ENCODE measurements at regions of chr2 and their contacts with region 1.

Region 1: DNA sequence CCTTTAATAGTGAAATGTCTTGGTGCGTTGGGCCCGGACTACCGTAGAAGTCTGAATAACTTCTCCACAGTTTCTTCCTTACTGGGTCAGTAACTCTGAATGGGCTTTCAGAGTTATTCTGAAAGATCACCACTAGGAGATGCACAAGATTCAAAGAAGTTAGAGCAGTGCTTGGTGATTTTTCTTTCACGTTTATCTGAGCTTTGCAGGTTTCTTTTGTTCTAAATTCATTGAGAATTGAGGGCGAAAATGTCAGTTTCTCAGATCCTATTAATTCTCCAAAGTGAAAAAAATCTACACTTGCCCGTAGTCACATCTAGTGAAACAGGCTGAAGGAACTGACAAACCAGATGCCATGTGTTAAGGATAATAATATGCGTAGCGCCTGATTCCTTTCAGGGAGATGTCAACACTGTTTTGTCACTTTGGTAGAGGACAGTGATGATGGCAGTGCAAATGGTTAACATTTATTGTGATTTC is 70.1 kb downstream of the QPCT start:
- DNase-seq: no peak
- H3K4me3 ChIP-seq: peak overlapping the region in 2 of 59 donors; percentile 11 to 39
- H3K27ac ChIP-seq: no peak overlapping the region
- H3K27me3 ChIP-seq: peaks cover 0 to 7% (median 0%) of the 10 kb centered on the region in 45 donors
- CTCF ChIP-seq: peak; percentile 63 to 93 (median 80)

Region 2: DNA sequence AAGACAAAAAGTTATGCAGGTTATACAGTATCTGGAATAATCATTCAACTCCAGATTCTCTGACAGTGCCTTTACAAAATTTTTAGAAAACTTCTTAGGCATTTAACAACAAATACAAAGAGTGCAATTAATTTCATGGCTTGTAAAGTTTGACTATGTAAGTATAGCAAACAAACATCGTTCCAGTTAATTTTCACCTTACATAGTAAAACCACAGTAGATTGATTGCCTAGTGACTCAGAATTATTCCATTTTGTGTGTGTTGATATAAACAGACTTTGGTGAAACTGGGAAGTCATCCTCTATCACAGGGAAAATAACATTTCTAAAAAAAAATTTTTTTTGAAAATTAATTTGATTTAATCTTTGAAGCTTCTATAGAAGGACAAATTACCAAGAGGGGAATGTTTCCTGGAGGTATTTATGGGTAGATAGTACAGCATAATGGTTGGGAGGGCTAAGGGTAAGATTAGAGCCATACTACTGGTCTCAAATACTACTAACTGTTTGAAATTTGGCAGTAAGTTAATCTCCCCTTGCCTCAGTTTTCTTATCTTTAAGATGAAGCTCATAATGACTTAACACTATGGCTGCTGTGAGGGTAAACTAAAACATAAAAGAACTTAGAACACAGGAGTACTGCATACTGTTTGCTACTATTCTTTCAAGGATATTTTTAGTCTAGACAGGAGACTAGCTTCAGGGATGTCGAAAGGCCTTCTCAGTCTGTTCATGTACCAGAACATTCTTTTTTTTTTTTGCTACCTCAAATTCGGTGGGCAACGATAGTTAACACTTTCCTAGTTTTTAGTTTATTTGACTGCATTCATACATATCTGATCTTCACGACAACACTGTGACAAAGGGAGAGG is 163.4 kb before region 1 on chr2:
- intact Hi-C with region 1: no loop called
- DNase-seq: no peak
- H3K4me3 ChIP-seq: no peak overlapping the region
- H3K27ac ChIP-seq: no peak overlapping the region
- H3K27me3 ChIP-seq: no peaks in the 10 kb centered on the region
- CTCF ChIP-seq: no peak

Region 3: DNA sequence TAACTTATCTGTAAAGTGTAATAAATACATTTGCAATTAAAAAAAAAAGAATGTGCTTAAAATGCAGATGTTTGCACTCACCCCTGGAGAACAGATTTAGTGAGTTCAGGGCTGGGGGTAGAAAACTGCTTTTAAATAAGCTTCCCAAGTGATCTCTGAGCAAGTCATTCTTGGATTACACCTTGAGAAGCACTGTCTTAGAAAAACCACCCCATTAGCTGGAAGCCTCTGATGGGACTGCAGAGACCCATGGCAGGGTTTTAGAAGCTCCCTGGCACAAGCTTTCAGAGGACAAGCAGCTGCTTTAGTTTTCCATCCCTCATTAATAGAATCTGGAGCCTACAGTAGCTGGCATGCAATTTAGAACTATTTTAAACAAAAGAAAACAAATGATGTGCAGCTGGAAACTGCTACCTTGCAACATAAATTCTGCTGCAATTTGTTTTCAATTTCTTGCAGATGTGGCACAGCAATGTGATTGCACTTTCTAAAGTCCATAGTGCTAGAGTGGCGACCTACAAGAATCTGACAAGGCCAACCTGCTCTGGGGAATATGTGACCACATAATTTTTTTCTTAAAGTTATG is 115.4 kb after region 1 on chr2:
- intact Hi-C with region 1: loop called in 1 of 2 experiments (anchors 10 kb)
- DNase-seq: no peak
- H3K4me3 ChIP-seq: no peak overlapping the region
- H3K27ac ChIP-seq: no peak overlapping the region
- H3K27me3 ChIP-seq: peaks cover 0 to under 1% (median 0%) of the 10 kb centered on the region in 45 donors
- CTCF ChIP-seq: no peak

Region 4: DNA sequence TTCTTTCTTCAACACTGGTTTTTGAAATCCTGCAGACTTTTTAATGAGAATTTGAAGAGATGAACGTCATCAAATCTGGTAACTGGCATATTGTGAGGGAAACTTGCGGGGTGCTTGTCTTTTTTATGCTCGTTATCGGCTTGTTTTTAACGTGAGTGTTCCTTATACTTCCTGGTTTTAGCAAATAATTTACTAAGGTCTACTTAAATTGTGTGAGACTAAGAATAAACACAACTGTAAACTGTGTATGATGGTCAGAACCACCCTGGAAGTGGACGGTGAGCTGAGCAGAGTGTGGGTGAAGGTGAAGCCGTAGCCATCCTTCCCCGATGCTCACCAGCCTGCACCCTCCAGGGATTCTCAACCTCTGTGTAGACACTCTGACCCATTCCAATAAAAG is 339.2 kb after region 1 on chr2:
- intact Hi-C with region 1: no loop called
- DNase-seq: no peak
- H3K4me3 ChIP-seq: no peak overlapping the region
- H3K27ac ChIP-seq: no peak overlapping the region
- H3K27me3 ChIP-seq: no peaks in the 10 kb centered on the region
- CTCF ChIP-seq: no peak

Region 5: DNA sequence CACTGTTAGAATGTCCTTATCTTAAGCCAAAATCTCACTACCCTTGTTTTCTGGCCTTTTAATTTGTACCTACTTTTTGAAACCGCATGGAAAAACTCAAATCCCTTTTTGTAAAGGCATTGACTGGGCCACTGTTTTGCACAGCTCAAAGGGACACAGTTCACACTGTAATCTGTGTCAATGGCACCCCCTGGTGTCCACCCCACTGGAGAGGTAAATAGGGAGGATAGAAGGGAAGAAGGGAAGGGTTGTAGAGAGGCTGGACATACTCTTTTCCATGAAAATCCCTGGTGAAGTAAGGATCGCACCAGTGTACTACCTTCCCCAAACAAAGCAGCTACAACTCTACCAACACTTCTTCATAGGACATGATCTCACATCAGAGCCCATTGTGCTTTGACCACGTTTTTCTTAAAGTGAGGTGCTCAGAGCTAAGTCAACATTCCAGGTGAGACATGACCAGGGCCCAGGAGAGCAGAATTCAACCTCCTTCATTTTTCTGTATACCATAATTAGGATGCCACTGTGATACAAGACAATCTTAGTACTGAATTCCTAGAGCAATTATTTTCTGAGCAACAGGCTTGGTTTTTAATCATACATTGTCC is 418.2 kb after region 1 on chr2:
- intact Hi-C with region 1: loop called (anchors 1 to 2 kb)
- DNase-seq: peak; percentile 44 to 93 (median 84)
- H3K4me3 ChIP-seq: no peak overlapping the region
- H3K27ac ChIP-seq: no peak overlapping the region
- H3K27me3 ChIP-seq: no peaks in the 10 kb centered on the region
- CTCF ChIP-seq: peak; percentile 61 to 93 (median 80)

Region 6: DNA sequence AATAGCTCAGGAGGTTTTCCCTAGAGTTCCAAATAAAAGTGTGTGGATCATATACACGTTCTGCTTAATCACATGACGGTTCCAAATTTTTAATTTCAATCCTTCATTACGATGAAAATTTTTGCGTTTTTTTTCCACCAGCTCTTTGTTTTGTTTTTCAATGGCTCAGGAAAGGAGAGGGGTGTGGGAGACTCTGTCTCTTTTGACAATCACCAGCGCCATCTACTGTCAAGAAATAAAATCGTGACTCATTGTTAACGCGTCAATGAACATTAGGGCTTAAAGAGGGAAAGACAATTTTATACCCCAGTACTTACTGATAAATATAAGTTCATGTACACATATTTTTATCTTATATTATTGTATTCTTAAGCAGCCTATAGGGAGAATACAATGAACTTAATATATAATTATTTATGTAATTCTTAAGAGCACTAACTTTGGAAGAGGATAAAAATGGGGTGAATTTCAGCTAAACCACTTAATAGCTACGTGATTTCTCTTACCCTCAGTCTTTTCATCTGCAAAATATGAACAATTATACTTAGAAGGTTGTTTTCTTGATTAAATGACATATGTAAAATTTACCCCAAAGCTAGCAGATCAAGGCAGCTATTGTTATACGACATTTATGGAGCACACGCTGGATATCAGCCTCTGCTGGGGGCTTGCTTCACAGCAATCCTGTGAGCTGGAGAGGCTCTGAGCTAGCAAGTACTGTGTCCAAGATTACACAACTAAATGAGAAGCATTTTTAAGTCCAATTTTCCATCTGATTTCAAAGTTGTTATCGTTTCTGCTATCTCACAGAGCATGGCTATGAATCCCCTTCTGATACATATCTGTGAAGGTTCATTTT is 463.2 kb after region 1 on chr2:
- intact Hi-C with region 1: loop called (anchors 5 kb)
- DNase-seq: peak in 1 of 10 donors; percentile 14
- H3K4me3 ChIP-seq: no peak overlapping the region
- H3K27ac ChIP-seq: no peak overlapping the region
- H3K27me3 ChIP-seq: peaks cover 0 to 5% (median 0%) of the 10 kb centered on the region in 45 donors
- CTCF ChIP-seq: peak; percentile 63 to 97 (median 84)